Naive thymus-derived CD4-positive, alpha-beta T cell (primary cell): ENCODE measurements at regions of chr10 and their contacts with region 1.

Region 1: DNA sequence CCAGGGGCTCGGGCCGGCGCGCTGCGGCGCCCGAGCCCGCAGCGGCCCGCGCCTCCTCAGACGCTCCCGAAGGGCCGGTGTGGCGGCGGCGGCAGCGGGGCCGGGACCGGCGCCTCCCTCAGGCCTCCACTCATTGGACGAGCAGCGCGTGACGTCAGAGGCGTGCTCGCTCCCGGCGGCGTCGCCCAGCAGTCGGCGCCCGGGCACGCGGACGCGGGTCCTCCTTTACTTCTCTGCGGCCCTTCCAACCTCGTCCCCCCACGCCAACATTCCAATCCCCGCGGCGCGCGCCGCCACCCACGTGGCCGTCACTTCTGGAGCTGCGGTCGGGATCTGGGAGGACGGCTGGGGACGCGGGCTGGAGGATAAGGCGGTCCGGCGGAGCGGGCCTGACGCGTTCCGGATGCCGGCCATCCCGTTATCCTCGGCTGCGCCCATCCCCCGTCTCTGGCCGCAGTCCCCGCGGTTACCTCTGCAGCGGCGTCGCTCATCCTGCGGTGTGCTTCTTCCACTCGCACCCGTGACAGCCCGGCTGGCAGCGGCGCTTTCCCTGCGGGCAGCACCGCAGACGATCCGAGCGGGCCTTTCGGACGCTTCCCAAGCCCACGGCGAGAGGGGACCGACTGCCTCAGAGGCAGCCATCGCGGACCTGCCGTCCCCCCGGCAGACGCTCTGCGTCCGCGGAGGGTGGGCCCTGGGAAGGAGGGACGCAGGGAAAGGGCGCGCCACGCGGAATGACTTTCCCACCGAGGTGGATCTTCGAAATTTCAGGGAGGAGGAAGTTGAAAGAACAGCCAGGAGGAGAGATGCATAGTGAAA is at the start of gene PDZD8:
- DNase-seq: peak; percentile 84 to 93 (median 89)
- ATAC-seq: peak; percentile 93
- H3K4me3 ChIP-seq: peak within 1 kb of the TSS; percentile 92
- H3K4me3 Mint-ChIP-seq: peak within 1 kb of the TSS; percentile 94 to 98 (median 96)
- H3K27ac ChIP-seq: peak within 1 kb of the TSS; percentile 78
- H3K27ac Mint-ChIP-seq: peak within 1 kb of the TSS; percentile 73 to 94 (median 92)
- H3K4me1 ChIP-seq: peaks cover 15 to 21% of the 10 kb centered on the region in 2 donors
- H3K4me1 Mint-ChIP-seq: peaks cover 21 to 36% (median 32%) of the 10 kb centered on the region in 7 donors
- H3K27me3 ChIP-seq: no peaks in the 10 kb centered on the region
- H3K27me3 Mint-ChIP-seq: peaks cover 6 to 45% (median 25%) of the 10 kb centered on the region in 5 donors
- total RNA-seq, gene PDZD8: 12.6 to 24.0 (median 17.1) TPM

Region 2: DNA sequence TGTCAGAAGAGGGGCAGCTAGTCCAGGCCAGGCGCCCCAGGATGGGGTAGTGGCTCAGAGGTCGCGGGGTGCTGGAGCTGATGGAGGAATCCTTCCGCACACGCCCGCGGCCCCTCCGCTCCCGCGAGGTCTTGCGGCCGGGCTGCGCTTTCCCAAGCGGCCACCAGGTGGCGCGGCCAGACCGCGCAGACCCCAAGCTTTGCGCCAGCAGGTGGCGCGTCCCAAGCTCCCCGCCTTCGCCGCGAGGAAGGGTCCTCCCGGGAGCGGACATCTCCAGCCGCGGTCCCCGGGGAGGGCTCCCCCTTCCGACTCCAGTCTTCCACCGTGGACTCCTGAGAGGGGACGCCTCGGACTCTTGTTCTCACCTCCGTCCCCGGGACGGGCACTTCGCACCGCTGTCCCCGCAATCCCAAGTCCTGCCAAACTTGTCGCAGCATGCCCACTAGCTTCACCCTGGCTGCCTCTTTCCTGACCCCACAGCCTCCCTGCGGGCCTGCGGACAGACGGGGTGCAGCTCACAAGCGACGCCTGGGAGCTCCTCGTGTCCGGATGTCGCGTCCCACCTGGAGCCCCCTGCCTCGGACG is 158.9 kb before region 1 on chr10:
- CTCF ChIA-PET with region 1: interaction called, 3 read pairs
- POLR2A ChIA-PET with region 1: no interaction called
- intact Hi-C with region 1: loop called in 1 of 2 experiments (anchors 1 kb)
- DNase-seq: peak; percentile 27 to 81 (median 64)
- ATAC-seq: peak; percentile 92
- H3K4me3 ChIP-seq: peak overlapping the region; percentile 62
- H3K4me3 Mint-ChIP-seq: peak overlapping the region; percentile 71 to 86 (median 80)
- H3K27ac ChIP-seq: no peak overlapping the region
- H3K27ac Mint-ChIP-seq: no peak overlapping the region
- H3K4me1 ChIP-seq: peaks cover 6 to 10% of the 10 kb centered on the region in 2 donors
- H3K4me1 Mint-ChIP-seq: peaks cover 0 to 9% (median 7%) of the 10 kb centered on the region in 7 donors
- H3K27me3 ChIP-seq: peaks cover 3 to 6% of the 10 kb centered on the region in 2 donors
- H3K27me3 Mint-ChIP-seq: peaks cover 21 to 45% (median 37%) of the 10 kb centered on the region in 5 donors

Region 3: DNA sequence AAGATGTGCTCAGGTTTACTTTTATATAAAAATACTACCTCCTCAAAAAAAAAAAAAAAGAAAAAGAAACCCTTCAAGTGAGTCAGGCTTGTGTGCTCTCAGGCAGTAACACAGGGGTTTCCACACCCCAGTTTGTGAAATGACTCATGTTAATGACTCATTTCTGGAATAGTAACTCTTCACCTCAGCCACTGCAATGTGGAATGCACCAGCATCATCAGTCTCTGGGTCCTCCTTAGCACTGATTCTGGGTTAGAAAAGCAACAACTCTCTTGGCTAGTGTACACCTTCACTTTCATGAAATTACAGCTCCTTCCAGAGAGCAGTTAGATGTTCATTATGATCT is 277.6 kb after region 1 on chr10:
- CTCF ChIA-PET with region 1: no interaction called
- POLR2A ChIA-PET with region 1: no interaction called
- intact Hi-C with region 1: loop called in 1 of 2 experiments (anchors 10 kb)
- DNase-seq: peak in 1 of 9 donors; percentile 37
- ATAC-seq: no peak
- H3K4me3 ChIP-seq: no peak overlapping the region
- H3K4me3 Mint-ChIP-seq: no peak overlapping the region
- H3K27ac ChIP-seq: no peak overlapping the region
- H3K27ac Mint-ChIP-seq: peak overlapping the region in 1 of 9 donors; percentile 62
- H3K4me1 ChIP-seq: no peaks in the 10 kb centered on the region
- H3K4me1 Mint-ChIP-seq: peaks cover 0 to 20% (median 0%) of the 10 kb centered on the region in 7 donors
- H3K27me3 ChIP-seq: no peaks in the 10 kb centered on the region
- H3K27me3 Mint-ChIP-seq: peaks cover 0 to 9% (median 0%) of the 10 kb centered on the region in 5 donors

Region 4: DNA sequence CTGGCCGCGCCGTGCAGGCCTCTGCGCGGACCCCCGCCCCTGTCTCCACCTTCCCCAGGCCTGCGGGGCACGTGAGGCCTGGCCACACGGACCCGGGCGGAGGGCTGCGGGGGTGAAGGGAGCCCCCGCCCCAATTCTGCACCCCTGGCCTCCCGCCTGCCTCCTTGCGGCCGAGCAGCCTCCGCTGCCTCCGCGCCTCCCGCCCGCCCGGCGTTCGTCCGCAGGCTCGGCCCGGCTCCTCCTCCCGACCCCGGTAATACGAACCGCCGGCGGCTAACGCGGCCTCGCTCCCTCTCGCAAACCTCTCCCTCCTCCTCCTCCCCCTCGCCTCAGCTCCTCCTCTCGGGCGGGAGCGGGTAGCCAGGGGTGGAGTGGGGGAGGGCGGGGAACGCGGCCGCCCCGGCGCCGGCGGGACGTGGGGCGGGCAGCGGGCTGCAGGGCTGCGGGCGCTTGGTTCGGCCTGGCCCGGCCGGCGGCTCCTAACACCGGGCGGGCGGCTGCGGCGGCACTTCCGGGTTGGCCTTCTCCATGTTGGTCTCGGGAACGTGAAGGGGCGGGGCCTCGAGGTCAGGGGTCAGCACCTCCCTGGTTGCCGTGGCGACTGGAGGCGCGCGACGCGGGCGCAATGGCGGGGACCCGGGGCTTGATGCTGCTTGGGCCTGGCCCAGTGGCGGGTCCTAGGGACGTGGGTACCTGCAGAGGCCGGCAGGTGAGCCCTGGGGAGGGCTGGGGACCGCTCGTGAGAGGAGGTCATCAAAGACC is 671.0 kb after region 1 on chr10 and contains the start of gene RAB11FIP2:
- CTCF ChIA-PET with region 1: no interaction called
- POLR2A ChIA-PET with region 1: no interaction called
- intact Hi-C with region 1: loop called (anchors 1 kb)
- DNase-seq: peak; percentile 92 to 98 (median 95)
- ATAC-seq: peak; percentile 97
- H3K4me3 ChIP-seq: peak within 1 kb of the TSS; percentile 81
- H3K4me3 Mint-ChIP-seq: peak within 1 kb of the TSS; percentile 84 to 95 (median 88)
- H3K27ac ChIP-seq: peak within 1 kb of the TSS; percentile 83
- H3K27ac Mint-ChIP-seq: peak within 1 kb of the TSS; percentile 77 to 94 (median 85)
- H3K4me1 ChIP-seq: peaks cover 18 to 19% of the 10 kb centered on the region in 2 donors
- H3K4me1 Mint-ChIP-seq: peaks cover 17 to 54% (median 49%) of the 10 kb centered on the region in 7 donors
- H3K27me3 ChIP-seq: no peaks in the 10 kb centered on the region
- H3K27me3 Mint-ChIP-seq: peaks cover 0 to 20% (median 0%) of the 10 kb centered on the region in 5 donors
- total RNA-seq, gene RAB11FIP2: 17.5 to 32.6 (median 21.6) TPM